PC-9 (cell line): ENCODE measurements at regions of chr6 and their contacts with region 1.

Region 1: DNA sequence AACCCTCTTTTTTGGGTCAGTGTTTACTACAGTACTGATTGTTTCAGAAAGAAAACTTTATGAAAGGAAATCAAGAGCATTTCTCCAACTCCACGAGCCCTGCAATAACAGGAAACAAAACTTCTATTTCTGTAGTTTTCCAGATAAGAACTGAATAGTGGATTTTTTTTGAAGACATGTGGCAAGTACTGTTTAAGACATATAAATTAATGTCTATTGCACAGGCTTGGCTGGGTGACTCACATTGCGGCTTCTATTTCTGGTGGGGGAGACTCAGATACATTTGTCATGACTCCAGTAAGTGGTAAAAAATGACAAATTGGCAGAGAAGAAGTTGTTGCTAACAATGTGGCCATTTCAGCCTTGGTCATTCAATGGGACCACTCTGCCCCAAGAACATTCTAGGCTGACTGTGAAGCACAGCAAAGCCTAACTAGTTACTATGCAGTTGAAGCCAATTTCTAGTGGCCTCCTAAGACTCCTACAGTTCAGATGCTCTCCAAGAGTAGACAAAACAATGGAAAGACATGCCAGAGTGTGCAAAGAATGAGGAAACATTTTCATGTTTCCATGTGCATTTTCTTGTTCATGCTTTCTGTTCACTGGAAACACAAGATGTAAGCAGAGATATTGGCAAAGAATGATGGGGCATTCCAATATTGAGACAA is 200.9 kb downstream of the EDN1 start:
- DNase-seq: peak; percentile 12 to 68
- H3K4me3 ChIP-seq: no peak overlapping the region
- H3K27ac ChIP-seq: peak overlapping the region; percentile 87
- H3K4me1 ChIP-seq: peaks cover 29% of the 10 kb centered on the region
- H3K27me3 ChIP-seq: no peaks in the 10 kb centered on the region
- CTCF ChIP-seq: no peak

Region 2: GRCh38 chr6:12504319-12504966 is 13.4 kb after region 1 on chr6:
- CTCF ChIA-PET with region 1: interaction called, 14 read pairs
- POLR2A ChIA-PET with region 1: no interaction called
- intact Hi-C with region 1: no loop called
- DNase-seq: no peak
- H3K4me3 ChIP-seq: no peak overlapping the region
- H3K27ac ChIP-seq: no peak overlapping the region
- H3K4me1 ChIP-seq: peaks cover 3% of the 10 kb centered on the region; the same call in 1 of the 2 replicates
- H3K27me3 ChIP-seq: no peaks in the 10 kb centered on the region
- CTCF ChIP-seq: peak; percentile 87